AG04450 (cell line): ENCODE measurements at regions of chr3 and their contacts with region 1.

Region 1: GRCh38 chr3:56988458-56989168 is 71.9 kb upstream of the SPATA12 start:
- DNase-seq: peak; percentile 58
- H3K4me3 ChIP-seq: no peak overlapping the region
- H3K27ac ChIP-seq: no peak overlapping the region
- H3K27me3 ChIP-seq: peaks cover 15% of the 10 kb centered on the region
- CTCF ChIP-seq: peak; percentile 75

Region 2: GRCh38 chr3:56693750-56694149 is 294.9 kb before region 1 on chr3:
- CTCF ChIA-PET with region 1: interaction called, 18 read pairs
- POLR2A ChIA-PET with region 1: interaction called, 4 read pairs
- DNase-seq: no peak
- H3K4me3 ChIP-seq: no peak overlapping the region
- H3K27ac ChIP-seq: no peak overlapping the region
- H3K27me3 ChIP-seq: peaks cover 2% of the 10 kb centered on the region
- CTCF ChIP-seq: no peak

Region 3: GRCh38 chr3:56702490-56703315 is 285.9 kb before region 1 on chr3:
- CTCF ChIA-PET with region 1: interaction called, 176 read pairs
- POLR2A ChIA-PET with region 1: interaction called, 5 read pairs
- DNase-seq: peak; percentile 46
- H3K4me3 ChIP-seq: no peak overlapping the region
- H3K27ac ChIP-seq: no peak overlapping the region
- H3K27me3 ChIP-seq: no peaks in the 10 kb centered on the region
- CTCF ChIP-seq: peak; percentile 84

Region 4: DNA sequence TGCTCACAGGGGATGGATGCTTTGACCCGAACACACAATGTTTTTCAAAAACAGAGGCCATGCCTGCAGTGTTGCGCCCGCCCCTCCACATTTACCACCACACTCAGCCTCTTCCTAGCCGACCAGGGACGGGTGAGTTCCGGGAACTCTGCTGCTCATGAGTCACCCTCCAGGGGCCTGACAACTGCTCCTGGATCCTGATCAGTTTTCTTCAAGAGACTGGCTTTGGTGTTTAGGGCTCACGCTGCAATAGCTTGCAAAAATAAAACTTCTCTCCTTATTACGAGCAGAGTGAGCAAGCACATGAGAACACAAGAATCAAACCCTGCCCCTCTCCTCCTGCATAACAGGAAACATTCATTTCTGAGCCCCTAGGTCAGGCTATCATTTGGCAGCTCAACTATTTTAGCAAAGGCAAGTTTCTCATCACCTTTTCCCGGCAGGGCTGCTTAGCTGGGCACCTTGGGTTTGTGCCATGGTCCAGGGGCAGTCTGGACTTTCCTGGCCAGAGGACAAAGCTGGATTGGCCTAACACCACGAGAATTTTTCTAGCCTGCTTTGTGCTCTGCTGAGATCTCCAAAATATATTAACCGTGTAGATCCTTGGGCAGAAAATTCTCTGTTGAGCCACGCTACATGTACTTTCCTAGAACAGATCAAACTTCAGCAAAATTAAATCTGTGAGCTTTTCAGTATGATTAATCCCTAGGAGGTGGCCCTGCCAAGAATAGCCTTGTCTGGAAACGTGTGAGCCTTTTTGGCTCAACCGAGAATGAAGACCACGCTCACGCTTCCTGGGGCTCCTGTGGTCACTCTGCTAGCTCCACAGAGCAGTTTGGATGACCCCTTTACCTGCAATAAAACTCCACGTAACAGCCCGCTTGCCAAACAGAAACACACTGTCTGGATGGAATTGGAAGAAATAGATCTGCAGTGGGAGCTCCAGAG is 19.2 kb after region 1 on chr3:
- CTCF ChIA-PET with region 1: interaction called, 10 read pairs
- POLR2A ChIA-PET with region 1: no interaction called
- DNase-seq: peak; percentile 61
- H3K4me3 ChIP-seq: peak overlapping the region; percentile 18
- H3K27ac ChIP-seq: peak overlapping the region; percentile 91
- H3K27me3 ChIP-seq: peaks cover 2% of the 10 kb centered on the region
- CTCF ChIP-seq: no peak